Colonic mucosa (tissue), 4 donors: ENCODE measurements at regions of chr7 and their contacts with region 1.

Region 1: GRCh38 chr7:92095380-92095779 is 38.9 kb downstream of the CYP51A1 start:
- DNase-seq: no peak
- H3K4me3 ChIP-seq: no peak overlapping the region
- H3K27ac ChIP-seq: no peak overlapping the region
- H3K4me1 ChIP-seq: no peaks in the 10 kb centered on the region
- H3K27me3 ChIP-seq: no peaks in the 10 kb centered on the region
- CTCF ChIP-seq: no peak

Region 2: GRCh38 chr7:92010215-92010614 is 85.2 kb before region 1 on chr7:
- intact Hi-C with region 1: loop called (anchors 10 kb)
- DNase-seq: no peak
- H3K4me3 ChIP-seq: no peak overlapping the region
- H3K27ac ChIP-seq: no peak overlapping the region
- H3K4me1 ChIP-seq: no peaks in the 10 kb centered on the region
- H3K27me3 ChIP-seq: no peaks in the 10 kb centered on the region
- CTCF ChIP-seq: no peak

Region 3: GRCh38 chr7:92230547-92230946 is 135.2 kb after region 1 on chr7:
- intact Hi-C with region 1: loop called (anchors 10 kb)
- DNase-seq: no peak
- H3K4me3 ChIP-seq: no peak overlapping the region
- H3K27ac ChIP-seq: no peak overlapping the region
- H3K4me1 ChIP-seq: no peaks in the 10 kb centered on the region
- H3K27me3 ChIP-seq: no peaks in the 10 kb centered on the region
- CTCF ChIP-seq: no peak